ENCODE measurements at regions of chr11 and their contacts with region 1.

Region 1: DNA sequence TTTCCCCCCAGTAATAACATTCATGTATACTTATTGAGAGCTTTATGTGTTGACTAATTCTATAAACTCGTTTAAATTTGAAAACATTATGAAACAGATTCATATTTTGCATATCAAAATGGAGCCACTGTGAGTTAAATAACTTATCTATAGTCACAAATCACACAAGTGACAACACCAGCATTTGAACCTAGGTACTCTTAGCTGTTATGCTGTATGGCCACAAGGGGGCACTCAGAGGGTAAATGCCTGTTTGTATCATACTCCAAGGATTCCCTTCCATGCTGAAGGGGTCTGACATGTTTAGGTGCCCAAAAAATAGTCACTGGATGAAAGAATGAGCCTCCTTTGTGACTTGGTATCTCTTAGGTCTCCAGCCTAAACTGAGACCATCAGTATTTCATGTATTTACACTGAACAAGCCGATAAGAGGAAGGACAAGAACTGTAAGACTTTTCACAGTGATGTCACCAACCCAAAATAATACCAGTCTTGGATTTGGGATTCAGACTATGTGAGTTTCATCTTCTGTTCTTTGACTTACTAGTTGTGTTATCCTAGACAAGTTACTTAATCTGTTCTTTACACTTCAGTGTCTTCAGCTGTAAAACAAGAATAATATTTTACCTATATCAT is 12.2 kb upstream of the OR52D1 start:
- DNase-seq: peak in 1 of 2 donors; percentile 38
- ATAC-seq: peak in 3 of 8 donors; percentile 39 to 59 (median 55)
- H3K4me3 ChIP-seq: no peak overlapping the region
- H3K27ac ChIP-seq: no peak overlapping the region
- H3K4me1 ChIP-seq: no peaks in the 10 kb centered on the region
- H3K27me3 ChIP-seq: peaks cover 0 to 6% (median 0%) of the 10 kb centered on the region in 7 donors
- CTCF ChIP-seq: peak; percentile 58 to 89 (median 83)

Region 2: GRCh38 chr11:5550440-5551095 is 74.3 kb after region 1 on chr11:
- intact Hi-C with region 1: loop called in 5 of 10 experiments (anchors 2 to 10 kb)
- DNase-seq: no peak
- ATAC-seq: no peak
- H3K4me3 ChIP-seq: no peak overlapping the region
- H3K27ac ChIP-seq: no peak overlapping the region
- H3K4me1 ChIP-seq: no peaks in the 10 kb centered on the region
- H3K27me3 ChIP-seq: no peaks in the 10 kb centered on the region
- CTCF ChIP-seq: no peak

Region 3: GRCh38 chr11:6219359-6219758 is 743.1 kb after region 1 on chr11:
- intact Hi-C with region 1: no loop called
- DNase-seq: peak in 1 of 2 donors; percentile 38
- ATAC-seq: peak in 7 of 8 donors; percentile 57 to 88 (median 79)
- H3K4me3 ChIP-seq: no peak overlapping the region
- H3K27ac ChIP-seq: peak overlapping the region in 6 of 10 donors; percentile 33 to 67 (median 50)
- H3K4me1 ChIP-seq: peaks cover 0 to 26% (median 10%) of the 10 kb centered on the region in 9 donors
- H3K27me3 ChIP-seq: no peaks in the 10 kb centered on the region
- CTCF ChIP-seq: no peak